ENCODE measurements at regions of chr2 and their contacts with region 1.

Region 1: DNA sequence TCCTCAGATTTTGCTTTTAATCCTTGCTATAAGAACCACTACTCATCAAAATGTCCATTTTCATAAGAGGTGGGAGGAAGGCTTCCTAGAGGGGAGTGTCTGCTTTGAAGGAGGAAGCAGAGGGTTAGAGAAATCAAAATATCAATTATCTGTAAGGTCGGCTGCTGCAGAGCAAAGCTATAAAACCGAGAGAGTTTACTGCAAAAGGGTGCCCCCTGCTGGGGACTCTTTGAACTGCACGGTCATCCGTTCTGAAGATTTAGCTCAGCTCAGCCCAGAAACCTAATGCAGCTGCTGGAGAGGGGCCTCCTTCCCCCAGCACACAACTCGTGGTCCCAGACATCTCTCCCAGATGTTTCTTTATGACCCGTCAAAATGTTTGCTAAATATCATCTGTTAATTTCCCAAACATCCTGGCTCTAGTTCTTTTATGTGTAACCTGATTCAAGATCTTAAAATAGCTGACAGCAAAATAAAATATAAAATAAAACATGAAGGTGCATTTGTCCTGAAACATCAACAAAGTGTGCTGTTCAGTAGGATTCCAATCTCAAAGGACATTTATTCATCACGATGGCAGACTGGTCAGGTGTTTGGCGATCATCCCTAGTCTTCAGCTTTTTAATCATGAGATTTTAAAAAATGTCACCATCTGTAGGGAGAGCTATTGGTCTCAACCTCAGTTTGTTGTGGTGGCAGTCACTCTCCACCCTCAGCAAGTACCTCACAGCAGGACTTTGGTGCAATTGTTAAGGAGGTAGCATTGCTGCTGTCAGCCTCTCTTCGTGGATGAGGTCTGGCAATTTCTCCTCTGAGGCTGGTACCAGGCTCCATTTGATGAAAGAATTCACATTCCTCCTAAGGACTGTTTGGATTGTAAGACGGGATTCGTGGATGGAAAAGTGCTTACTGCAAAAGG is 185.9 kb downstream of the MTX2 start:
- DNase-seq: peak; percentile 86
- H3K4me3 Mint-ChIP-seq: no peak overlapping the region
- H3K27ac Mint-ChIP-seq: no peak overlapping the region
- H3K4me1 Mint-ChIP-seq: no peaks in the 10 kb centered on the region
- H3K27me3 Mint-ChIP-seq: peaks cover 19% of the 10 kb centered on the region

Region 2: DNA sequence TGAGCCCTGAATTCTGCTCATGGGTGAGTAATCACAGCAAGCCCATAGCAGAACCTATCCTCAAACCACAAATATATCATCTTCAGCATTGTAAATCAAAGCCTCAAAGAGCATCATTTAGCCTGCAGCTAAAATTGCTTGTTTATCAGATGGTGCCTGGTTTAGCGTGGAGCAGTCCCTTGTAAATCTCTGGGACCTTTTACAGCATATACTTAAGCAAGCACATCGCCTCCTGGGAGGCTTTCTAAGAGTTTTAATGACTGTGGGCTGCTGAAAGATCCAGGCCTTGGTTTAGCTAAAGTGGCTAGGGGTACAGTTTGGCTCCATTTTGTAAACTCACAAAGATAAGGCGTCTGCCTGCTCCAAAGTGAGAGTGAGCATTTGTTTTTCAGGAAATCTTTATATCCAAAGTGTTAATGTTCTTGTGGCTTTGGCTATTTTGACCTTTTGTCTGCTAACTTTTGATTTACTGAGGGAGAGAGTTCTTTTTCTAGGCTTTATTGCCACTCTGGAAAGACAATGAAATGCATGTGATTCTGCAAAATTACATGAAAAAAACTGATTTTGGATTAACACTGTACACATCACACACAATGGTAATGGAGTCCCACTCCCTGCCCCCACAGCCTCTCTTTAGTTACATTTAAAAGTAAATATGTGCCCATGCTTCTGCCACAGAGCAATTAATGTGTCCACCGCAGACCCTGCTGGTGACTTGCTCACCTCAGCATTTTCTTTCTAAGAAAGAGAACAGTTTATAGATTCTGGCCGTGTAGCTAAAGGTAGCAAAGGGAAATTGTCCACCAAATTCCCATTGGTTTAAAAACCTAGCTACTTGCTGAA is 647.9 kb before region 1 on chr2:
- CTCF ChIA-PET with region 1: no interaction called
- POLR2A ChIA-PET with region 1: no interaction called
- intact Hi-C with region 1: no loop called
- DNase-seq: no peak
- H3K4me3 Mint-ChIP-seq: no peak overlapping the region
- H3K27ac Mint-ChIP-seq: no peak overlapping the region
- H3K4me1 Mint-ChIP-seq: no peaks in the 10 kb centered on the region
- H3K27me3 Mint-ChIP-seq: peaks cover 12% of the 10 kb centered on the region

Region 3: DNA sequence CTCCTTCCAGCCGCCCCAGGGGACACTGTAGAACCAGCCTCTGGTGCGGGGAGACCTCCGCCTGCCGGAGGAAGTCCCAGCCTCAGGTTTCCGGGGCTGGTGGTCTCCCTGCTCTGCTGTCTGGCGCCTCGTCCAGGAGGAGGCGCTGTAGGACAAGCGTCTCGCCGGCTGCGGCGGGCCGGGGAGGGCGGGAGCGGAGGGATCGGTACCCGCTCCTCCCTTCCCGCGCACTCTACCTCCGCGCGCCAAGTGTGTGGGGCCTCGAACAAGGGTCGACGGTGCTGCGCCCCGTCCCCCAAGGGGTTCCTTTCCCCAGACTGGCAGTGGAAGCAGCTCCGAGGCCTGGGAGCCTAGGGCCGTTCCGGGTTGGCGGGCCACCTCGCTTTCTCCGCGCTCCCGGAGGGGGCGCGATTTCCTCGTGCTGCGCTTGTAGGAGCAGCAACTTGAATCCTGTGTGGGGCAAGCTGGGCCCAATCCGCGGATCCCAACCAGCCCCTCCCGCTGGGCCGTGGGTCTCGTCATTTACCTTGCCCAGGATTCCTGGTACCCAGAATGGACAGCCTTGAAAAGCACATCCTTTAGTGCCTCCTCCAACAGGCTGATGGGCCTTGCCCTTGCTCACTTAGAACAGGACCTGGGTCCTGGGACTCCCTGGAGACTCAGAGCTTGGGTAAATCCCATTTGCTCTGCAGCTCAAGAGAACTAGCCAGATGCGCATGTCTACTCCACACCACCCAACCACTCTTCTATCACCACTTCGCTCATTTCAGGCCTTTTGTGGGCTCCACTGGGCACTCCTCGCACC is 314.4 kb before region 1 on chr2:
- CTCF ChIA-PET with region 1: interaction called, 108 read pairs
- POLR2A ChIA-PET with region 1: no interaction called
- intact Hi-C with region 1: loop called (anchors 1 kb)
- DNase-seq: peak; percentile 75
- H3K4me3 Mint-ChIP-seq: no peak overlapping the region
- H3K27ac Mint-ChIP-seq: no peak overlapping the region
- H3K4me1 Mint-ChIP-seq: peaks cover 15% of the 10 kb centered on the region
- H3K27me3 Mint-ChIP-seq: peaks cover 74% of the 10 kb centered on the region

Region 4: DNA sequence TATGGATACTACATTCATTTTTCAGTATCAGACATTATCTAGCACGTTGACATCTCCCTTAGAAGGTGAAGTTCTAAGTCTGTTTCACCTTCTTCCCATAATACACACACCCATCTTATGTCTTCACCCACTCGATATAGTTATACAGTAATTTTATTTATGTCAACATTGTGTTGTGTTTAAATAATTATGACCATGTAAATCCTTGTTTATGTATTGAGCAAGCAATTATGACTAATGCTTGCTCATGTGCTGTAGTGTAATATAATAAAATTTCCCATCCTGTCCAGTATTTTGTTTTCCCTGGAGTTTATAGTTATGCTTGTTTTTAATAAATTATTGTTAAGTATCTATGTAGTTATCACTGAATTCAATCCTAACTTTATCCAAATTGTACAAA is 22.7 kb before region 1 on chr2:
- CTCF ChIA-PET with region 1: interaction called, 12 read pairs
- POLR2A ChIA-PET with region 1: no interaction called
- intact Hi-C with region 1: no loop called
- DNase-seq: no peak
- H3K4me3 Mint-ChIP-seq: no peak overlapping the region
- H3K27ac Mint-ChIP-seq: no peak overlapping the region
- H3K4me1 Mint-ChIP-seq: no peaks in the 10 kb centered on the region
- H3K27me3 Mint-ChIP-seq: peaks cover 5% of the 10 kb centered on the region

Region 5: GRCh38 chr2:176554101-176555048 is 99.2 kb after region 1 on chr2:
- CTCF ChIA-PET with region 1: interaction called, 16 read pairs
- POLR2A ChIA-PET with region 1: no interaction called
- intact Hi-C with region 1: no loop called
- DNase-seq: peak; percentile 36
- H3K4me3 Mint-ChIP-seq: peak overlapping the region; percentile 66
- H3K27ac Mint-ChIP-seq: no peak overlapping the region
- H3K4me1 Mint-ChIP-seq: peaks cover 9% of the 10 kb centered on the region
- H3K27me3 Mint-ChIP-seq: peaks cover 53% of the 10 kb centered on the region

Region 6: DNA sequence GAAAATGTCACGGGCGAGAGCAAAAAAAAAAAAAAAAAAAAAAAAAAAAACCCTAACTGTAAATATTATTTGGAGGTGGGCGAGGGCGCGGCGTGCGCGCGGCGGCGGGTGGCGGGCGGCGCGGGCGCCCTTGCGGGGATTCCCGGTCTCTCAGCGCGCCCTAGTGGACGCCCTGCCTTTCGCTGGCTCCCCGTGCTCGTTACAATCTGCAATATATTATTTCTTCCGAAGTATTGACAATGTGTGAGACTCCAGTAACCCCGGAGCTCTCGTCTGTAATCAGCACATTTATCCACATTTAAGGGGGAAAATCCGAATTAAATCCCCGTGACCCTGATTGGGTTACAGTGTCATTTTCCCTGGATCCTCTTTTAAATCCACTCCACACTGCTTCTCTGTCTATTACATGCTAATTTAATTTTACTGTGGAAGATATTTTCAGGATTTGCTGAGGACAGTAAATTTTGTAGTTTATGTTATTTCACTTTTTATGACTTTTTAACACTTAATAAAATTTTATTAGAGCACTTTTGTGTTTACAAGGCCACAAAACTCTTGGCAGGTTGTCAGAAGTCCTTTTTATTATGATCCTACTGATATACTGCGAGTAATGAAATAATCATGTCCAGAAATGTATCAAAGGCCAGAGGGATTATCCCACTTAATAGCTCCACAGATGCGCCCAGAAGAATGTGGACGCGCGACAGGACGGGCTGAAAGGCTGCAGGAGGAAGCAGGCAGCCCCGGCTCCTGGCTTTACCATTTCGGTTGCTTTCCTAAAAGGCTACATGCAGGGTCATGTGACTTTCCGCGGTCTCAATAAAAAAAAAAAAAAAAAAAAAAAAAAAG is 183.2 kb after region 1 on chr2:
- CTCF ChIA-PET with region 1: interaction called, 17 read pairs
- POLR2A ChIA-PET with region 1: no interaction called
- intact Hi-C with region 1: loop called (anchors 5 kb)
- DNase-seq: peak; percentile 65
- H3K4me3 Mint-ChIP-seq: peak overlapping the region; percentile 58
- H3K27ac Mint-ChIP-seq: no peak overlapping the region
- H3K4me1 Mint-ChIP-seq: peaks cover 2% of the 10 kb centered on the region
- H3K27me3 Mint-ChIP-seq: peaks cover 45% of the 10 kb centered on the region

Region 7: DNA sequence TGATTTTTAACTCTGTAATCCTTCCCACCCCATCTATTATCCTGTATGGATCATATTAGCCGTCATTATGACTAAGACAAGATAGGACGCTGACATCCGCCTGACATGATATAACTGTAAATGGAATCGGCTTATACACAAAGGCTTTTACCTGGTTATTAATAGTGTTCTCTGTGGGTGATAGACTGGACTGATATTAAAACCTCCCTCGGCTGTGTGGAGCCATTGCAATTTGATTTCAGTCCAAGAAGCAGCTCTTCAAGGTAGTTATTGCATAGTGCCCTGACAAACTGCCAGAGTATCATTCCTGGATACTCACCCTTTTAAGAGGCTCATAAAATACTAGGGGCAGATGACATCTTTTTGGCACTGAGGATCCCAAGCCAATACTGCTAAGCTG is 531.3 kb after region 1 on chr2:
- CTCF ChIA-PET with region 1: no interaction called
- POLR2A ChIA-PET with region 1: no interaction called
- intact Hi-C with region 1: no loop called
- DNase-seq: no peak
- H3K4me3 Mint-ChIP-seq: no peak overlapping the region
- H3K27ac Mint-ChIP-seq: no peak overlapping the region
- H3K4me1 Mint-ChIP-seq: no peaks in the 10 kb centered on the region
- H3K27me3 Mint-ChIP-seq: peaks cover 18% of the 10 kb centered on the region

Region 8: DNA sequence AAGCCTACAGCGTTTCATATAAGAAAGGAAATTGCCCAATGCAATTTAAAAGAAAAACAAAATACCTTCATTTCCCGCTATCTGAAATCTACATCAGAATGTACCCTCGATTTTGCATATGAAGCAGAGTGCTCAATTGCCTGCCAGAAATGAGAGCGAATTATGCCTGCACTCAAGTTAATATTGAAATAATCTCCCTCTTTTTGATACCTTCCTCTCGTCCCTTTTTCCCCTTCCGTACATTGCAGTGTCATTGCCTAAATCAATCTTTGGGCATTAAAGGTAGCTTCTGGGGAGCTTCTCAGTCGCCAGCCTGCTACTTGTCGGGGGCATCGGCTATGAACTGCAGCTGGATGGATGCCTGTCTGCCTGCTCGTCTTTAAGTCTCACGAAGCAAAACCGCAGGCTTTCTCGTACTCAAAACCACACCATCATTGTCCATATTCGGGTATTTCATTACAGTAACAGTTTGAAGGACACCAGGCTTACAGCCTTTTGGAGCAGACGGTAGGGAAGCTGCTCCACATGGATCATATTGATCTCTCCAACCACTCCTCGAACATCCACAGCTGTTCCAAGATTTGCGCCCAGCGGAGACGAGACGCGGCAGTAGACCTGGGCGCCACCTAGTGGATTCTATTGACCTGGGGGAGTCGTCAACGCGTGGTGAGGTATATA is 693.5 kb after region 1 on chr2:
- CTCF ChIA-PET with region 1: interaction called, 14 read pairs
- POLR2A ChIA-PET with region 1: no interaction called
- intact Hi-C with region 1: loop called (anchors 10 kb)
- DNase-seq: peak; percentile 81
- H3K4me3 Mint-ChIP-seq: peak overlapping the region; percentile 78
- H3K27ac Mint-ChIP-seq: no peak overlapping the region
- H3K4me1 Mint-ChIP-seq: peaks cover 12% of the 10 kb centered on the region
- H3K27me3 Mint-ChIP-seq: peaks cover 20% of the 10 kb centered on the region

Measured in activated CD4-positive, alpha-beta memory T cell treated with anti-CD3 and anti-CD28 coated beads for 36 hours (primary cell).